HAP-1 (cell line): ENCODE measurements at regions of chr17 and their contacts with region 1.

Region 1: GRCh38 chr17:27879987-27880608 is 13.1 kb downstream of the LYRM9 start:
- DNase-seq: peak; percentile 56 to 82
- H3K4me3 ChIP-seq: no peak overlapping the region
- H3K4me1 ChIP-seq: no peaks in the 10 kb centered on the region
- H3K27me3 ChIP-seq: no peaks in the 10 kb centered on the region

Region 2: DNA sequence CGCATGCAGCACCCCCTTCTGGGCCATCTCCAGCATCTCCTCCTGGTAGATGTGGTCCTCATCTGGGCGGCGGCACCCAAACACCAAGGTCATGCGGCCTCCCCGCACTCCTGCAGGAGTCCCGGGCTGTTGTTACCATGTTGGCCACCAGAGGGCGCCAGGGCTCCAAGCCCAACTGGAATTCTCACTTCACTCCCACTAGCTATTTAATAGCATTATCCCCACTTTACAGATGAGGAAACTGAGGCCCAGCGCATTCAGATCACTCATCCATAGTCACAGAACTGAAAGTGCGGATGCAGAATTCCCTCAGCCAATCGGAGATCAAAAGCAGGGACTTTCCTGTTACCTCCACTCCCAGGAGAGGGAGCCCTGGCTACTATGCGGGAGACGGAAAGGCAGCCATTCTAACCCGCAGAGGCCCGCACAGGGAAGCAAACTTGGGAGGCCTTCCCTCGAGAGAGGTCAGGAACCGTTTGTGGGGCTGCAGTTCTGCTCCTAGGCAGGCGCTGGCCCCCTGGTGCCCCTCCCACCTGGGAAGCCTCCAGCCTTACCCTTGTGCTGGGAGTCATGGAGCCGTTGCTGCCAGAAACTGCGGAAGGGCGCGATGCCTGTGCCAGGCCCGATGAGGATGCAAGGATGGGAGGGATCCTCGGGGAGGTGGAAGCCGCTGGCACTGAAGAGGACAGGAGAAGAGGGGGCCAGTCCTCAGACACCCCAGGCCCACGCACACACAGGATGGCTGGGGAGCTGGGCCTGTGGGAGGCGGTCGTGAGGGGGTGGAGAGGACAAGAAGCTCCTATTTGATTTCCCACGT is 119.8 kb before region 1 on chr17:
- in situ Hi-C with region 1: loop called (anchors 5 kb)
- DNase-seq: peak; percentile 16 to 86
- H3K4me3 ChIP-seq: no peak overlapping the region
- H3K4me1 ChIP-seq: no peaks in the 10 kb centered on the region
- H3K27me3 ChIP-seq: no peaks in the 10 kb centered on the region

Region 3: GRCh38 chr17:27800522-27800921 is 79.6 kb before region 1 on chr17 and contains the start of gene NOS2:
- in situ Hi-C with region 1: loop called (anchors 5 kb)
- DNase-seq: no peak
- H3K4me3 ChIP-seq: no peak within 1 kb of the TSS
- H3K4me1 ChIP-seq: 0 out of 2 replicates have a peak, but pooled peaks cover under 1% of the 10 kb centered on the region
- H3K27me3 ChIP-seq: no peaks in the 10 kb centered on the region; the same call in 1 of the 2 replicates

Region 4: DNA sequence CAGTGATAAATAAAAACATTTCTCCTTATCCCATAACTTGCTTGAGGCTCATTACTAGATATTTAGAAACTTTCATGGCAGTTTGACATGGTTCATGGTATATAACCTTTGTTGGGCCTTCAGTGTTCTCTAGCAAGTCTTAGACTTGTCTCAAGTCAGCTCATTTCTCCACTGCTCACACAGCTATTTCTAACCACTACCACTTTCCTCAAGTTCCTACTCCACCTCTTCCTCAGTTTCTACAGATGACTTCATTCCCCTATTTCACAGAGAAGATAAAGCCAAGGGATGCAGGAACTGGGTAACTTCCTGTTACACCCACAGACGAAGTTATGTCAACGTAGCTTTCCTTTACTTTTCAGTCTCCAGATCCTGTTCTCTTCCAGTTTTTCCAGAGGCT is 185.6 kb after region 1 on chr17:
- in situ Hi-C with region 1: no loop called
- DNase-seq: no peak
- H3K4me3 ChIP-seq: no peak overlapping the region
- H3K4me1 ChIP-seq: peaks cover 5% of the 10 kb centered on the region
- H3K27me3 ChIP-seq: no peaks in the 10 kb centered on the region